GM12878 (cell line): ENCODE measurements at regions of chr17 and their contacts with region 1.

Region 1: DNA sequence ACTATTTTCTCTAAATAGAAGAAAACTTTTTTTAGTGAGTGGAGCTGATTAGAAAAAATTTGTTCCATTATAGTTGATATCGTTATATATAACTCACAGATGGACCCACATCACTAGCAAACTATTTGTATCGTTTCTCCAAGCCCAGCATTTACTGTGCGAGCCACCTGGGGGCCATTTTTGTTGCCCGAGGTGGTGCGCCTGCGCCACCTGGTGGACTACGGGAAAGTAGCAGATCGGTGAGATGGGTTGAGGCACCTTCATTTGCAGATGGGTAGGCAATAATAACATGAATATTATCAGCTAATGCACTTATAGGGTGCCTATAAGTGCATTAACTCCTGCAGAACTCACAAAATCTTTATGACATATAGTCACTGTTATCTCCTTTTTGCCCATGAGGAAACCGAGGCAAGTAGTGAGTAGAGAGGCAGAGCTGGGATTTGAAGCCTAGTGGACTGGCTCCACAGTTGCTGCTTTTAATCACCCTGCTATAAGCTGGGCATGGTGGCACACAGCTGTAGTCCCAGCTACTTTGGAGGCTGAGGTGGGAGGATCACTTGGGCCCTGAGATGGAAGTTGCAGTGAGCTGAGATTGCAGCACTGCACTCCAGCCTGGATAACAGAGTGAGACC is 23.2 kb upstream of the NTN1 start:
- DNase-seq: peak; percentile 40
- ATAC-seq: peak; percentile 86
- H3K4me3 ChIP-seq: no peak overlapping the region
- H3K27ac ChIP-seq: no peak overlapping the region
- H3K4me1 ChIP-seq: peaks cover 21% of the 10 kb centered on the region
- H3K27me3 ChIP-seq: peaks cover 4 to 5% of the 10 kb centered on the region in 2 experiments; a peak in 3 of 4 replicates
- CTCF ChIP-seq: peak; percentile 96 to 99 (median 96); a peak in 5 of 6 replicates
- EP300 ChIP-seq: no peak
- POLR2A ChIP-seq: no peak
- RAD21 ChIP-seq: peak; percentile 100

Region 2: GRCh38 chr17:8409966-8410864 is 587.9 kb before region 1 on chr17:
- CTCF ChIA-PET with region 1: interaction called, 17 read pairs
- POLR2A ChIA-PET with region 1: no interaction called
- RAD21 ChIA-PET with region 1: interaction called, 15 read pairs
- SMC1A ChIA-PET with region 1: interaction called, 5 read pairs
- in situ Hi-C with region 1: no loop called
- intact Hi-C with region 1: no loop called
- DNase-seq: peak; percentile 17
- ATAC-seq: peak; percentile 90
- H3K4me3 ChIP-seq: no peak overlapping the region
- H3K27ac ChIP-seq: no peak overlapping the region
- H3K4me1 ChIP-seq: no peaks in the 10 kb centered on the region
- H3K27me3 ChIP-seq: peaks cover 0 to 4% of the 10 kb centered on the region in 2 experiments; a peak in 3 of 4 replicates
- CTCF ChIP-seq: peak; percentile 82 to 87 (median 83)
- EP300 ChIP-seq: 0 out of 4 replicates have a peak, but pooled peaks of 1 of the 2 experiments have one; percentile 15
- POLR2A ChIP-seq: no peak
- RAD21 ChIP-seq: peak; percentile 71

Region 3: DNA sequence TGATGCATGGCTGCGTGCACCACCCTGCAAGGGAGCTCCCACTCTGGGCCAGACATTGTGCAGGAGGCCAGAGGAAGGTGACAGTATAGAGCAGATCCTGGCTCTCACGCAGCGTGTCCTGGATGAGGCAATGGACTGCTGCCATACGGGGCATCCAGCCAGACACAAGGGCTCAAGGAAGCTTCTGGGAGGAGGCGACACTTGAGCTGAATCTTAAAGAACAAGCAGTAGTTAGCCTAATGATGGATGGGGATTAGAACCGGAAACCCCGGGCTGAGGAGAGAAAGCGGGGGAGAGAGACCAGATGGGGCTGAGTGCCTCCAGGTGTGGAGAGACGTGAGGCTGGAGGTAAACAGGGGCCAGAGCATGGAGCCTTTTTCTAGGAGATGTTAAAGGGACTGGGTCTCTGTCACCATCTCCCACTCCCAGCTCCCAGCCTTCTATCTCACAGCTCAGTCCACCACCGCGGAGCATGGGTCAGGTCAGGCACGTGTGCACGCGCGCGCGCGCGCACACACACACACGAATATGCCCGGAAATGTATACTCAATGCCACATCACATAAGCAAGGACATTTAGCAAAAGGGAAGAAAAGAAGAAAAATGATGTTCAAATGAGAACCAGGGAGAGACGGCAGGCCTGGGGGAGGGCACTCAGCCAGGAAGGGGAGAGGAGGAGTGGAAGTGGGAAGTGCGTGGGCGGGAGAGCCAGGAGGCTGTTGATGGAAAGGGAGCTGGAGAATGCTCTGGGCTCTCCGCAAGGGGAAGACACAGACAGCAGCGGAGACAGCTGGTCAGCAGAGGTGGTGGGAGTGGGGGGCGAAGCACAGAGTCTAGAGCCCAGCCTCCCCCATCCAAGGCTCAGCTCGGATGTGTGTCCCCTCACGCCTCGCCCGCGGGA is 299.7 kb before region 1 on chr17:
- CTCF ChIA-PET with region 1: no interaction called
- POLR2A ChIA-PET with region 1: no interaction called
- RAD21 ChIA-PET with region 1: no interaction called
- SMC1A ChIA-PET with region 1: no interaction called
- in situ Hi-C with region 1: no loop called
- intact Hi-C with region 1: no loop called
- DNase-seq: no peak
- ATAC-seq: no peak
- H3K4me3 ChIP-seq: no peak overlapping the region
- H3K27ac ChIP-seq: no peak overlapping the region
- H3K4me1 ChIP-seq: no peaks in the 10 kb centered on the region
- H3K27me3 ChIP-seq: peaks cover 0 to 2% of the 10 kb centered on the region in 2 experiments; a peak in 2 of 4 replicates
- CTCF ChIP-seq: no peak
- EP300 ChIP-seq: no peak
- POLR2A ChIP-seq: no peak
- RAD21 ChIP-seq: no peak

Region 4: DNA sequence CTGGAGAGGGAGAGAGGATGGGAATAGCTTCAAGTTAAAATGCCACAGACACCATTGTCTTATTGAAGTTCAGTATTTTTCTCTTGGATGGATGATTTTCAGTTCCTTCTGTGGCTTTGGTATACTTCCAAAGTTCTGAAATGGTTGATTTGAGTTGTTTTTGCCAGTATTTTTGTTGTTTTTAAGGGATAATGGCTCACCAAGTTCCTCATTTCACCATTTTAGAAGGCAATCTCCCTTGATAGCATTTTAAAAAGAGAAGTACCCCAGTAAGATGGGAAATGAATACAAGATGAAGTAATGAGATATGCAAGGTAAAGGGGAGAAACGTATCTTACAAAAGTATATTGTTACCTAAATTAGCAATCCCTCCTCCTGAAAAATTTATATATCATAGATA is 221.2 kb before region 1 on chr17:
- CTCF ChIA-PET with region 1: interaction called, 10 read pairs
- POLR2A ChIA-PET with region 1: no interaction called
- RAD21 ChIA-PET with region 1: no interaction called
- SMC1A ChIA-PET with region 1: interaction called, 4 read pairs
- in situ Hi-C with region 1: no loop called
- intact Hi-C with region 1: no loop called
- DNase-seq: no peak
- ATAC-seq: no peak
- H3K4me3 ChIP-seq: no peak overlapping the region
- H3K27ac ChIP-seq: no peak overlapping the region
- H3K4me1 ChIP-seq: no peaks in the 10 kb centered on the region
- H3K27me3 ChIP-seq: no peaks in the 10 kb centered on the region; a peak in 1 of 4 replicates
- CTCF ChIP-seq: no peak
- EP300 ChIP-seq: no peak
- POLR2A ChIP-seq: no peak
- RAD21 ChIP-seq: no peak

Region 5: GRCh38 chr17:8857919-8858318 is 140.2 kb before region 1 on chr17:
- CTCF ChIA-PET with region 1: interaction called, 10 read pairs
- POLR2A ChIA-PET with region 1: no interaction called
- RAD21 ChIA-PET with region 1: interaction called, 4 read pairs
- SMC1A ChIA-PET with region 1: no interaction called
- in situ Hi-C with region 1: no loop called
- intact Hi-C with region 1: no loop called
- DNase-seq: peak; percentile 95
- ATAC-seq: peak; percentile 40
- H3K4me3 ChIP-seq: peak overlapping the region; percentile 57; the same call in 1 of the 2 replicates
- H3K27ac ChIP-seq: peak overlapping the region; percentile 99
- H3K4me1 ChIP-seq: peaks cover 60% of the 10 kb centered on the region
- H3K27me3 ChIP-seq: no peaks in the 10 kb centered on the region
- CTCF ChIP-seq: no peak
- EP300 ChIP-seq: peak; percentile 98 to 99
- POLR2A ChIP-seq: no peak
- RAD21 ChIP-seq: peak; percentile 12; the same call in 1 of the 2 replicates

Region 6: DNA sequence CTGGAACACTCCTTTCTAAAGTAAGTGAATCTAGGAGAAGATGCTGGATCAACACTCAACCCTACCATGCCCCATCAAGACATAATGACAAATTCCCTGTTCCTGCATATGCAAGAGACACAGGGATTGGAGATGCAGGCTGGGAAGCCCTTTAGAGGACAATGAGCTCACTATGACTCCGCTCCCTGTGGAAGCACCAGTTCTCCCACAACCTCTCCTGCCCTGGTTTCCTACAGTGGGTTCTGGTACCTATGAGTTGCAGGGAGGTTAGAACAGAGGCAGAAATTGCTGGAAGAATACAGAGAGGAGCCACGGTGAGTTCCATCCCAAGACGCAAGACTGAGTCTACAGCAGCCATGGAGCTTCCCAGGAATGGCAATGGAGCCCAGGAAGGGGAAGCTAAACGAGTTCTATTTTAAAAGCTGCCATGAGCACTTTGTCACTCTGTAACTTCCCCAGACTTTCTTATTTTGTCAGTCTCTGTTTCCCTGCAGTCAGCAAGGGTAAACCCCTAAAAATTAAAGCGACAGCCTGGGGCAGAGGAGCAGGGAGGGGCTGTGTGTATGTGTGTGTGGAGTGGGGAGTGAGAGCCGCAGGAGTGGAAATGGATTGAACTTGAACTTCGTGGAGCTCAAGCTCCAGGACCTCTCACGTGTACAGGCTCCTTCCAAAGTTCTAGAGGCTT is 88.4 kb before region 1 on chr17:
- CTCF ChIA-PET with region 1: interaction called, 6 read pairs
- POLR2A ChIA-PET with region 1: interaction called, 4 read pairs
- RAD21 ChIA-PET with region 1: interaction called, 4 read pairs
- SMC1A ChIA-PET with region 1: interaction called, 10 read pairs
- in situ Hi-C with region 1: no loop called
- intact Hi-C with region 1: no loop called
- DNase-seq: no peak
- ATAC-seq: peak; percentile 28; the same call in 2 of the 3 replicates
- H3K4me3 ChIP-seq: no peak overlapping the region
- H3K27ac ChIP-seq: no peak overlapping the region
- H3K4me1 ChIP-seq: peaks cover 21% of the 10 kb centered on the region
- H3K27me3 ChIP-seq: no peaks in the 10 kb centered on the region
- CTCF ChIP-seq: no peak
- EP300 ChIP-seq: no peak
- POLR2A ChIP-seq: no peak
- RAD21 ChIP-seq: no peak

Region 7: DNA sequence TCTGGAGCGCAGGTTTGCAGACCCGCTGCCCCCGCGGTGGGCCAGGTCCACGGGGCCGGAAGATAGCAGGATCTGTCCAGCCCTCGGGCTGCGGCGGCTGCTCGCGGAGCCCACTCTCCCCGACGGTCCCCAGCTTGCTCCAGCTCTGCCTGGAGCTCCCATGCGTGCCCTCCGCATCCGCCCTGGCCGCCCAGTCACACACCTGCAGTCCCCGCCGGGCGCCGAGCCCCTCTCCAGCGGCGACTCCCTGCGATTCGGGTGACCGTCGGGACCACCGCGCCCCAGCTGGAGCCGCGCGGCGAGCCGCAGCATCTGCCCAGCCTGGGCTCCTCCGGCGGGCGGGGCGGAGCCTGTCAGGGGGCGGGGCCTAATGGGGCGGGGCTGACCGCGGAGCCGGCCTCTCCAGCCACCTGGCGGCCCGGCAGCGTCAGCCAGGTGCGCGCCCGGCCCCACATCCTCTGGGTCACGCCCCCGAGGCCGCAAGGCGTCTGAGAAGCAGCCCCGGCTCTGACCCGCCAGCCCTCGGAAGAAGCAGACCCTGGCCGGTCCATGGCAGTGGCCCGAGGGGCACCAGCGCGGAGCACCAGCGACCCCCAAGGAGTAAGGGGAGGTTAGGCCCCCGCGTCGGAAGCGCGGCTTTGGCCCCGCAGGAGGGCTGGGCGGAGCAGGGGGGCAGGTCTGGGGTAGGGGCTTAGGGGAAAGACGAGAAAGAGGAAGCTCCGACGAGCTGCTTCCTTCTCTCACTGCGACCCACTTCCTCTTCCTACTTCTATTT is 32.5 kb before region 1 on chr17 and contains the start of gene PIK3R5:
- CTCF ChIA-PET with region 1: interaction called, 44 read pairs
- POLR2A ChIA-PET with region 1: interaction called, 3 read pairs
- RAD21 ChIA-PET with region 1: interaction called, 14 read pairs
- SMC1A ChIA-PET with region 1: interaction called, 12 read pairs
- in situ Hi-C with region 1: no loop called
- intact Hi-C with region 1: no loop called
- DNase-seq: no peak
- ATAC-seq: peak; percentile 79
- H3K4me3 ChIP-seq: peak within 1 kb of the TSS; percentile 90
- H3K27ac ChIP-seq: peak within 1 kb of the TSS; percentile 80
- H3K4me1 ChIP-seq: peaks cover 28% of the 10 kb centered on the region
- H3K27me3 ChIP-seq: no peaks in the 10 kb centered on the region
- CTCF ChIP-seq: peak in 1 of 3 experiments; percentile 27; a peak in 2 of 6 replicates
- EP300 ChIP-seq: no peak
- POLR2A ChIP-seq: peak; percentile 87
- RAD21 ChIP-seq: no peak
- polyA plus RNA-seq, gene PIK3R5: 9.5 to 9.6 TPM

Region 8: GRCh38 chr17:9522074-9522473 is 524.0 kb after region 1 on chr17:
- CTCF ChIA-PET with region 1: interaction called, 25 read pairs
- POLR2A ChIA-PET with region 1: no interaction called
- RAD21 ChIA-PET with region 1: interaction called, 14 read pairs
- SMC1A ChIA-PET with region 1: interaction called, 14 read pairs
- in situ Hi-C with region 1: no loop called
- intact Hi-C with region 1: loop called (anchors 5 kb)
- DNase-seq: no peak
- ATAC-seq: peak; percentile 74
- H3K4me3 ChIP-seq: no peak overlapping the region
- H3K27ac ChIP-seq: no peak overlapping the region
- H3K4me1 ChIP-seq: no peaks in the 10 kb centered on the region
- H3K27me3 ChIP-seq: no peaks in the 10 kb centered on the region
- CTCF ChIP-seq: peak; percentile 45 to 60 (median 53); a peak in 5 of 6 replicates
- EP300 ChIP-seq: no peak
- POLR2A ChIP-seq: no peak
- RAD21 ChIP-seq: peak; percentile 83